Right ventricle myocardium inferior (tissue), 1 donor: ENCODE measurements at regions of chr7 and their contacts with region 1.

Region 1: DNA sequence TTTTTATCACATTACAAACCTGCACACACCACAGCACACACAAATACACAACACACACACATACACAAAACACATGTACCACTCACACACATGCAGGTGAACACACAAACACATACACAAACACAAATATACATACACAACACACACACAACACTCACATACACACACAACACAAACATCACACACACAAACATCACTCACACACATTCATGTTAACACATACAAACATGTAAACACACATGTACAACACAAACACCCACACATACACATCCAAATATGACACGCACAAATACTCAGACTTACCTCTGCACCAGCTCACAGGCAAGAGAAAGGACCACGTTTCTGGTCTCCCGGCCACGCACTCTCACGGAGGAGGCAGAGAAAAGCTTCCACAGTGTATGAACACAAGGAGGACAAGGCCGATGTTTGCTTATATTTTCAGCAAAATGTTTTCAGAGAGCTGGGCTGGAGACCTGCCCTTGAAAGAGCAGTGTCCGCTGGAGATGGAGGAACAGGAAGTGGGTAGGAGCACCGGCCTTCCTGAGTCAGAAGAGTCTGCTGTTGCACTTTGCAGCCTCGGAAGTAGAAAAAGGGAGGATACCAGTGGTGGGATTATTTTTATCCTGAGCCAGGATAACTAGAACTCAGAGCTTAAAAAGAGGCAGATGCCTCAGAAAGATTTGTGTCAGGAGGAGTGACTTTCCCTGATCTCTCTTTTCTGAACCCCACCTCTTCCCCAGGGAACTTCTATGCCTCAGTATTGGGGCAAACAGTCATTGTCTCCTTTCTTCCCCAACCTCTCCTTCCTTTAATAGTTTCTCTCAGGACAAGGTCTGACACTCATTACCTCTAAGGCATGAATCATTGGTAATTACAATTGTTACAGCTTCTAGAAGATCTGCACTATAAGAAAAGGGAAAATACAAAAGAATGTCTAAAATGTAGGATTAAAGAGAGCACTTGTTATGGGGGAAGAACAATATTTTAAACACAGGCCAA is at the start of gene GIMAP6:
- DNase-seq: peak; percentile 75
- ATAC-seq: no peak
- total RNA-seq, gene GIMAP6: 33.5 TPM

Region 2: DNA sequence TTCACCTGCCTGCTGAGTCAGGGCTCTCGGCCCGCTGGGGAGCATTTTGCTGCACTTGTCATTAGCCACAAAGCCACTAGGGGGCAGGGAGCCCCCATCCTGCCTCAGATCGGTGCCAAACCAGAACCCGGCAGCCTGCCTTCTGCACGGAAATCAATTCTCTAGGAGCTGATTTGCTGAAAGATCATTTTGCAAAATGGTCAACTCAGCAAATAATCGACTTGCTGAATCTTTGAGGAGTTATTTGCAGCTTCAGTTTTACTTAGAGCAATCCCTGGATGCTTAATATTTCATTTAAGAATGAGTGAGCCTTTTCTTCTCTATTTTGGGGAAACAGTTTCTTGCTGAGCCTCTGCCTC is 183.4 kb before region 1 on chr7:
- intact Hi-C with region 1: loop called (anchors 1 kb)
- DNase-seq: peak; percentile 93
- ATAC-seq: peak; percentile 60

Region 3: GRCh38 chr7:150514748-150515222 is 117.4 kb before region 1 on chr7 and contains the start of gene GIMAP7:
- intact Hi-C with region 1: loop called (anchors 5 kb)
- DNase-seq: no peak
- ATAC-seq: peak; percentile 71
- total RNA-seq, gene GIMAP7: 21.4 TPM

Region 4: GRCh38 chr7:150716368-150716767 is 84.2 kb after region 1 on chr7 and contains the start of gene GIMAP1:
- intact Hi-C with region 1: loop called (anchors 2 kb)
- DNase-seq: peak; percentile 70
- ATAC-seq: peak; percentile 82
- total RNA-seq, gene GIMAP1: 5.8 TPM

Region 5: DNA sequence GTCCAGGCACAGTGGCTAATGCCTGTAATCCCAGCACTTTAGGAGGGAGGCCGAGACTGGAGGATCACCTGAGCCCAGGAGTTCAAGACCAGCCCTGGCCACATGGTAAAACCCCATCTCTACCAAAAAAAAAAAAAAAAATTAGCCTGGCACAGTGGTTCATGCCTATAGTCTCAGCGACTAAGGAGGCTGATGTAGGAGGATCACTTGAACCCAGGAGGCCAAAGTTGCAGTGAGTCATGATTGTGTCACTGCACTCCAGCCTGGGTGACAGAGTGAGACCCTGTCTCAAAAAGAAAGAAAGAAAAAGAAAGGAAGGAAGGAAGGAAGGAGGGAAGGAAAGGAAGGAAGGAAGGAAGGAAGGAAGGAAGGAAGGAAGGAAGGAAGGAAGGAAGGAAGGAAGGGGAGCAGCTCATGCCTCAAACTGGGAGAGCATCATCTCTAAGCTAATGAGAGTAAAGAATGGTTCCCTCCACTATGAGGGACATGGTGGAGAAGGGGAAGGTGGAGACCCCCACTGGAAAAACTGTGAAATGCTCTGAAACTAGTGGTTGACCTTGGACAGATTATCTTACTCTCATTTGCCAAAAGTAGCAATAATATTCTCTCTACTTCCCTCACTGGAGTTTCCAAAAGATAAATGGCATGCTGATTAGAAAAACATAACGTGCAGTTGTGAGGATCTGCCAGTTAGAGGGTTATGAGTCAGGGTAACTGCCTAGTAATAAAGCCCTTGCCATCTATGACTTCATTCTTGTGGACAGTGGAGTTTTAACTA is 121.8 kb after region 1 on chr7:
- intact Hi-C with region 1: loop called (anchors 2 kb)
- DNase-seq: no peak
- ATAC-seq: no peak